ENCODE measurements at regions of chr5 and their contacts with region 1.

Region 1: GRCh38 chr5:87412630-87413342 is at the start of gene CCNH:
- DNase-seq: peak; percentile 98
- H3K4me3 Mint-ChIP-seq: peak within 1 kb of the TSS; percentile 95
- H3K27ac Mint-ChIP-seq: peak within 1 kb of the TSS; percentile 95
- H3K4me1 Mint-ChIP-seq: peaks cover 34% of the 10 kb centered on the region
- H3K27me3 Mint-ChIP-seq: no peaks in the 10 kb centered on the region
- total RNA-seq, gene CCNH: 58.1 to 61.6 TPM

Region 2: DNA sequence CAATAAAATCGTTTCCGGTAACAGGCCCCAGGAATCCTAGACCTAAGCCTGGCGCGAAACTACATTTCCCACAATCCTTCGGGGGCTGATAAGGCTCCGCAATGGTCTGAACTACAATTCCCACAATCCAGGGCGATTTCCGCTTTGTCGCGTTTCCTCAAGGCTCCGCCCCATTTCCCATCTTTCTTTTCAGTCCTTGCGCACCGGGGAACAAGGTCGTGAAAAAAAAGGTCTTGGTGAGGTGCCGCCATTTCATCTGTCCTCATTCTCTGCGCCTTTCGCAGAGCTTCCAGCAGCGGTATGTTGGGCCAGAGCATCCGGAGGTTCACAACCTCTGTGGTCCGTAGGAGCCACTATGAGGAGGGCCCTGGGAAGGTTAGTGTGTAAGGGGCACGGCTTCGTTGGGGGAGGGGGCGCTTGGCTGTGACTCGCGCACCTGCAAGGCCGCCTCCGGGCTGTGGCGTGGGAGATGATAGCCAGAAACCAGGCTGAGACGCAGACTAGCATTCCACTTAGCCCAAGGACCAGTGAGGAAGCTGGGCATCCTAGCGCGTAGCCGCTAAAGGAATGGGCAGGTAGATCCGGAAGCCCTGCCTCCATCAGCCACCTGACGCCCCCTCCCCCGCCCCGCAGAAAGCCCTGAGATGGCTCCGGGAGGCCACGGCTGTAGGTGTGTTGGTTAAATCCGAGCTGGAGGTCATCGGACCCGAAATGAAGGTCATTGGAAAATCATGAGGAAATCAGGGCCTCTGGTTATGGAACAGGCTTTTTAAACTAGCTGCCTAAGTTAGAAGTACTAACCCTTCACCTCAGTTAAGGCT is 794.8 kb before region 1 on chr5 and contains the start of gene COX7C:
- CTCF ChIA-PET with region 1: no interaction called
- intact Hi-C with region 1: loop called (anchors 1 kb)
- DNase-seq: peak; percentile 96
- H3K4me3 Mint-ChIP-seq: peak within 1 kb of the TSS; percentile 100
- H3K27ac Mint-ChIP-seq: peak within 1 kb of the TSS; percentile 99
- H3K4me1 Mint-ChIP-seq: peaks cover 21% of the 10 kb centered on the region
- H3K27me3 Mint-ChIP-seq: peaks cover 2% of the 10 kb centered on the region
- total RNA-seq, gene COX7C: 925 to 952 TPM

Region 3: GRCh38 chr5:87340716-87341115 is 72.1 kb before region 1 on chr5:
- CTCF ChIA-PET with region 1: no interaction called
- intact Hi-C with region 1: loop called (anchors 1 kb)
- DNase-seq: no peak
- H3K4me3 Mint-ChIP-seq: peak overlapping the region; percentile 33
- H3K27ac Mint-ChIP-seq: peak overlapping the region; percentile 77
- H3K4me1 Mint-ChIP-seq: peaks cover 20% of the 10 kb centered on the region
- H3K27me3 Mint-ChIP-seq: no peaks in the 10 kb centered on the region

Region 4: GRCh38 chr5:87400305-87400899 is 12.4 kb before region 1 on chr5:
- CTCF ChIA-PET with region 1: interaction called, 29 read pairs
- intact Hi-C with region 1: no loop called
- DNase-seq: no peak
- H3K4me3 Mint-ChIP-seq: no peak overlapping the region
- H3K27ac Mint-ChIP-seq: no peak overlapping the region
- H3K4me1 Mint-ChIP-seq: peaks cover 34% of the 10 kb centered on the region
- H3K27me3 Mint-ChIP-seq: no peaks in the 10 kb centered on the region

Region 5: DNA sequence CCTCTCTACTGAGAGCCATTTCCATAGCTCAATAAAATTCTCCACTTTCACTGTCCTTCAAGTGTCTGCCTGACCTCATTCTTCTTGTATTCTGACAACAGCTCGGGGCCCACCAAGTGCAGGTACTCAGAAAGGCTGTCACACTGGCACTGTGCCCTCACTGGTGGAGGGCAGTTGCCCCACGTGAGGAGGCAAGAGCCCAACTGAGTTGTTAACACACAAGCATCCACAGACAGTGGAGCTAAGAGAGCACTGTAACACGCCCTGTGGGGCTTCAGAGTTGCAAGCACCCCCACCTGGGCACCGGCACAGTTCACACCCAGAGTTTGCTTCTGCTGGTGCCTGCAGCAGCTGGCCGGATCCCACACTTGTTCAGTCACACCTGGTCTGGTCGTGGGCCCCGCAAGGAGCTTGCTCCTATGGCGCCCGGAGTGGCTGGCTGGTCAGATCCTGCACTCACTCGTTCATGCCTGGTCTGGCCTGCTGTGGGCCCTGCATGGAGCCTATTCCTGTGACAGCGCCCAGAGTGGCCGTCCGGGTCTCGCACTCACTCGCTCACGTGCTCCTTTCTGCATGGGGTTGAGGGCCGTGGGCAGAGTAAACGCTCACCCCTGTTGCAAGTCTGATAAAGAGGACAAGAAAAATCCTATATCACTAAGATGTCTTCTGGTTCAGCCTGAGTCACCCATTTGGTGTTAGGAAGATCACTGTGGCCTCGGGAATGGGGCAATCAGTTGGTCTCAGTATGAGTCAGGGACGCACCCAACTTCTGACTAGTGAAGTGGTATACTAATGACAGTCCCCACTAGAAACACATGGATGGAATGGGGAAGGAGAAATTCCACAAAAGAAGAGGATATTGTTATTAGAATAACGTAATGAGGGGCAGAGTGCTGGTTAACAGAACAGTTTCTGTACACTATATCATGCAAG is 87.0 kb after region 1 on chr5:
- CTCF ChIA-PET with region 1: no interaction called
- intact Hi-C with region 1: no loop called
- DNase-seq: no peak
- H3K4me3 Mint-ChIP-seq: no peak overlapping the region
- H3K27ac Mint-ChIP-seq: no peak overlapping the region
- H3K4me1 Mint-ChIP-seq: no peaks in the 10 kb centered on the region
- H3K27me3 Mint-ChIP-seq: no peaks in the 10 kb centered on the region

Region 6: GRCh38 chr5:88268385-88269184 is 855.8 kb after region 1 on chr5 and contains the start of gene TMEM161B:
- CTCF ChIA-PET with region 1: no interaction called
- intact Hi-C with region 1: loop called (anchors 1 kb)
- DNase-seq: peak; percentile 94
- H3K4me3 Mint-ChIP-seq: peak within 1 kb of the TSS; percentile 93
- H3K27ac Mint-ChIP-seq: peak within 1 kb of the TSS; percentile 96
- H3K4me1 Mint-ChIP-seq: peaks cover 42% of the 10 kb centered on the region
- H3K27me3 Mint-ChIP-seq: no peaks in the 10 kb centered on the region
- total RNA-seq, gene TMEM161B: 18.0 to 18.1 TPM

Region 7: GRCh38 chr5:88680253-88681132 is 1267.7 kb after region 1 on chr5:
- CTCF ChIA-PET with region 1: no interaction called
- intact Hi-C with region 1: loop called (anchors 5 kb)
- DNase-seq: peak; percentile 77
- H3K4me3 Mint-ChIP-seq: peak overlapping the region; percentile 43
- H3K27ac Mint-ChIP-seq: no peak overlapping the region
- H3K4me1 Mint-ChIP-seq: peaks cover 15% of the 10 kb centered on the region
- H3K27me3 Mint-ChIP-seq: peaks cover 73% of the 10 kb centered on the region

Region 8: DNA sequence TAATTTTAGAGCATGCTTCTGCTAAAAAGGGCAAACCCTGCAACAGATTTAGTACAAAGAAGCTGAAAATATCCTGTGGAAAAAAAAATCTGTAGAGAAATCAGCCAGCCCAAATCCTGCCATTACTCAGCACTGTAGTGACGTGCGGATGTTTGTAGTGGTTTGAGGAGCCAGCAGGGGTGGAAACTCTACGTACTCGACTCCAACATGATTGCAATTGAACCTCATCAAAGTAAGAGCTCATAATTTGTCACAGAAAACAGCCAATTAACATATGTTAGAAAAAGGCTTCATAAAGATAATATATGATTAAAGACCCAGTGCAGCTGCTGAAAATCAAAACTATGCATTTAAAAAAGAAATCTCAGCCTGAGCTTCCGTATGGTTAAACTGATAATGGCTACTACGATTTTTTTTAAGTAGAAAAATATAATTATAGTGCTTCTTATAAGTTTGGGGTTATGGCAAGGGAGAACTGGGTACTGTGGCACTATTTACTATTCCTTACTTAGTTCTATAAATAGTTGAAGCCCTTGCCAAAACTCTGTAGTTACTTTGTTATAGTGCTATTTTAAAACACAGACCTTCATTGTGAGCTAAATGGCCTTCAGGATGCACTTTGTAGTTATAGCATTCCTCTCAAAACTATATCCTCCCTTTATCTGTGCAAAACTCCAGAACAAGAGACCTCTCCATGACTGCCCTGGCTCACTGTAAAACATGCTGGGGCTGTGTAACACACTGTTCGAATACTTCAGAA is 1420.8 kb after region 1 on chr5:
- CTCF ChIA-PET with region 1: no interaction called
- intact Hi-C with region 1: loop called (anchors 10 kb)
- DNase-seq: peak; percentile 78
- H3K4me3 Mint-ChIP-seq: no peak overlapping the region
- H3K27ac Mint-ChIP-seq: no peak overlapping the region
- H3K4me1 Mint-ChIP-seq: peaks cover 23% of the 10 kb centered on the region
- H3K27me3 Mint-ChIP-seq: peaks cover 16% of the 10 kb centered on the region

Measured in activated naive CD4-positive, alpha-beta T cell treated with anti-CD3 and anti-CD28 coated beads for 36 hours (primary cell).